ENCODE measurements at regions of chr10 and their contacts with region 1.

Region 1: GRCh38 chr10:99930731-99931550 is 78.8 kb downstream of the DNMBP start:
- DNase-seq: peak; percentile 70 to 96
- H3K4me3 ChIP-seq: peak overlapping the region; percentile 87
- H3K27ac ChIP-seq: peak overlapping the region; percentile 98
- H3K4me1 ChIP-seq: peaks cover 20% of the 10 kb centered on the region
- H3K27me3 ChIP-seq: no peaks in the 10 kb centered on the region
- CTCF ChIP-seq: no peak

Region 2: GRCh38 chr10:99815621-99816020 is 115.3 kb before region 1 on chr10:
- CTCF ChIA-PET with region 1: no interaction called
- POLR2A ChIA-PET with region 1: no interaction called
- intact Hi-C with region 1: no loop called
- DNase-seq: no peak
- H3K4me3 ChIP-seq: no peak overlapping the region
- H3K27ac ChIP-seq: no peak overlapping the region
- H3K4me1 ChIP-seq: no peaks in the 10 kb centered on the region
- H3K27me3 ChIP-seq: no peaks in the 10 kb centered on the region
- CTCF ChIP-seq: no peak

Region 3: GRCh38 chr10:99976886-99977665 is 46.1 kb after region 1 on chr10:
- CTCF ChIA-PET with region 1: no interaction called
- POLR2A ChIA-PET with region 1: no interaction called
- intact Hi-C with region 1: loop called (anchors 5 kb)
- DNase-seq: peak; percentile 29 to 94
- H3K4me3 ChIP-seq: peak overlapping the region; percentile 44
- H3K27ac ChIP-seq: peak overlapping the region; percentile 89
- H3K4me1 ChIP-seq: peaks cover 26% of the 10 kb centered on the region
- H3K27me3 ChIP-seq: no peaks in the 10 kb centered on the region
- CTCF ChIP-seq: no peak